ENCODE measurements at regions of chr19 and their contacts with region 1.

Region 1: GRCh38 chr19:15418588-15419412 is at the start of gene AKAP8L:
- DNase-seq: peak; percentile 94
- ATAC-seq: peak; percentile 92
- H3K4me3 Mint-ChIP-seq: peak within 1 kb of the TSS; percentile 99
- H3K27ac Mint-ChIP-seq: peak within 1 kb of the TSS; percentile 99
- H3K4me1 Mint-ChIP-seq: peaks cover 42% of the 10 kb centered on the region
- H3K27me3 Mint-ChIP-seq: no peaks in the 10 kb centered on the region
- CTCF ChIP-seq: no peak
- total RNA-seq, gene AKAP8L: 126 and 163 TPM in 2 replicates

Region 2: DNA sequence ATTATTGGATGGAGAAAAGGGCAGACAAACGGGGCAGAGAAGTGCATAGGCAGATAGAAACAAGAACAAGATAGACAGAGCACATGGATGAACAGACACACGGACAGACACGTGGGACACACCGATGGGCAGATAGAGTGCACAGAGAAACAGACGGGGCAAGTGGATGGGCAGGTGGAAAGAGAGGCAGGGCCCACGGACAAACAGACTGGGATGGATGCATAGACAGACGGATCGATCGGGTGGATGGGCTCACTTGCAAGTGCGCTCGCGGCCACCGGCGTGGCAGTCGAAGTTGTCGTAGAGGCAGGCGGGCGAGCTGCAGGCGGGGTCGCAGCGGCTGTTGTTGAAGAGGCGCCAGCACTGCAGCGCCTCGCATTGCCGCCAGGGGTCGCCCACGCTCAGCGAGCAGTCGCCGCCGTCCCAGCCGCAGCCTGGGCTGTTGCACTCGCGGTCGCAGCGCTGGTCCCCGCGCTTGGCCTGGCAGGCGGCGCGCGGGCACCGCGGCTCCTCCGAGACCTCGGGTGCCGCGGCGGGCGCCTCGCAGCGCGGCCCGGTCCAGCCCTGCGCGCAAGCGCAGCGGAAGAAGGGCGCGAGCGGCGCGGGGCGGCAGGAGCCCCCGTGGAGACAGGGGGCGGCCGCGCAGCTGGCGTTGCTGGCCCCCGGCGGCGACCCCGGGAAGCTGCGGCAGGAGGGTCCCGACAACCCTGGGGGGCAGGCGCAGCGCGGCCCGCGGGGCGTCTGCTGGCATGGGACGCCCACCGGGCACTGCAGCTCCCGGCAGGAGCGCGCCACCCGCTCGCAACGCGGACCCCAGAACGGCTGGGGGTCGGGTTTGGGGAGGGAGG is 241.3 kb before region 1 on chr19:
- CTCF ChIA-PET with region 1: interaction called, 9 read pairs
- POLR2A ChIA-PET with region 1: no interaction called
- intact Hi-C with region 1: loop called (anchors 1 kb)
- DNase-seq: peak; percentile 87
- ATAC-seq: peak; percentile 98
- H3K4me3 Mint-ChIP-seq: no peak overlapping the region
- H3K27ac Mint-ChIP-seq: no peak overlapping the region
- H3K4me1 Mint-ChIP-seq: peaks cover 4% of the 10 kb centered on the region
- H3K27me3 Mint-ChIP-seq: peaks cover 16% of the 10 kb centered on the region
- CTCF ChIP-seq: peak; percentile 80

Region 3: DNA sequence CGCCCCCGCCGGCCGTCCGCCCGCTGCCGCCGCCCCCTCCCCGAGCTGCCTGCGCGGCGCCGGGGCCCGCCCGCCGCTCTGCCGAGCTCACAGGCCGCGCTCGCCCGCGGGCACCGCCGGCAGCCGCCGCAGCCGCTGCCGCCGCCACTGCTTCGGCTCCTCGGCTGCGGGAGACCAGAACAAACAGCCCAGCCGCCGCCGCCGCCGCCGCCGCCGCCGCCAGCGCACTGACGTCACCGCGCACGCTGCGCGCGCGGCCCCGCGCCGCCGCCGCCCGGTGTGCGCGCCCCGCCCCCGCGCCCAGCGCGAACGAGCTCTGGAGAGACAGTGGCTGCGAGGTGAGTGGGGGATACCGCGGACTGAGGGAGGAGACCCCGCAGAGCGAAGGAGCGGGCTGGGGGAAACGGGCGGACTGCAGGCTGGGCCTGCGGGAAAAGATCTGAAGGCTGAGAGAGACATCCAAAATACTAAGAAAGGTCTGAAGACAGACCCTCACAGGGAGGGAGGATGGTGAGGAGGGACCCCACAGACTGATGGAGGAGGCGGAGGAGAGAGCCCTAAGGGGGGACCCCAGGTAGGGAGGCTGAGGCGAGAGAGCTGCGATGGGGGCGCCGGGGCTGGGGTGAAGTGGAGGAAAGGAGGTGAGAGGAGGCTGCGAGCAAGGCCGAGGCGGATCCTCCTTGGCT is 86.3 kb before region 1 on chr19 and contains the start of gene BRD4:
- CTCF ChIA-PET with region 1: interaction called, 5 read pairs
- POLR2A ChIA-PET with region 1: interaction called, 29 read pairs
- intact Hi-C with region 1: loop called (anchors 2 kb)
- DNase-seq: peak; percentile 86
- ATAC-seq: peak; percentile 35
- H3K4me3 Mint-ChIP-seq: peak within 1 kb of the TSS; percentile 95
- H3K27ac Mint-ChIP-seq: peak within 1 kb of the TSS; percentile 95
- H3K4me1 Mint-ChIP-seq: peaks cover 60% of the 10 kb centered on the region
- H3K27me3 Mint-ChIP-seq: no peaks in the 10 kb centered on the region
- CTCF ChIP-seq: no peak
- total RNA-seq, gene BRD4: 144 and 164 TPM in 2 replicates

Region 4: DNA sequence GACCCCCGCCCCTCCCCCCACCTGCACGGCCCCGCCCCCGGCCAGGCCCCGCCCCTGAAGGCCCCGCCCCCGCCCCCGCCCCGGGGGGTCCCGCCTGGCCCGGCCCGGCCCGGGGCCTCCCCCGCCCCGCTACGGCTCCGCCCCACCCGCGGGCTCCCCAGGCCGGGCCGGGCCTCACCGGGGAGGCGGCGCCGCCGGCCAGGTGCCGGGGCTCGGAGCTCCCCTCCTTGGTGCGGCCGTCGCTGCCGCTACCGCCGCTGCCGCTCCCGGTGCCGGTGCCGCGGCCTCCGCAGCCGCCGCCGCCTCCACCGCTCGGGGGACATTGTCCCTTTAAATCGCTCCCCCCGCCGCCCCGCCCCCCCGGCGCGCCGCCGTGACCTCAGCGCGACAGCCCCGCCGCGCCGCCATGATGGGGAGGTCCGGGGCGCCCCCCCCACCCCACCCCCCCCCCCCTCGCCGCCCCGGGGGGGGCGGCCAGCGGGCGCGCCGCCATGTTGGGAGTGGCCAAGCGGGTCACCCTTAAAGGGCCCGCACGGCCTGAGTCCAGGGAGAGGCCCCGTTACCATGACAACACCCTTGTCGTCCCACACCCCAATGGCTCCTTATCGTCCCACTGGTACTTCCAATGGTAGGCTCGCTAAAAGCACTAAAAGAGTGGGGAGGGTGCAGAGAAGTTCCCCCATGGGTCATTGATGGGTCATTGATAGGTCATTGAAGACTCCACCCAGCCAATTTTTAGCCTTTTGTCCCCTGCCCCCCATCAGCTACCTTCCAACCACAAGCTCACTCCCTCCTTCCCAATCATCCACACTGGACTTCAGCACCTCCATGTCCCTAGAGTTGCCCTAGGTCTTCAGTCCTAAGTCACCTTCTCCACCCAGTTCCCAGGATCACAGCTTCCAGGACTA is 31.1 kb after region 1 on chr19 and contains the start of gene WIZ:
- CTCF ChIA-PET with region 1: no interaction called
- POLR2A ChIA-PET with region 1: interaction called, 14 read pairs
- intact Hi-C with region 1: loop called (anchors 1 kb)
- DNase-seq: peak; percentile 89
- ATAC-seq: peak; percentile 74
- H3K4me3 Mint-ChIP-seq: peak within 1 kb of the TSS; percentile 80
- H3K27ac Mint-ChIP-seq: peak within 1 kb of the TSS; percentile 90
- H3K4me1 Mint-ChIP-seq: peaks cover 17% of the 10 kb centered on the region
- H3K27me3 Mint-ChIP-seq: no peaks in the 10 kb centered on the region
- CTCF ChIP-seq: no peak
- total RNA-seq, gene WIZ: 32.6 and 34.1 TPM in 2 replicates

Region 5: DNA sequence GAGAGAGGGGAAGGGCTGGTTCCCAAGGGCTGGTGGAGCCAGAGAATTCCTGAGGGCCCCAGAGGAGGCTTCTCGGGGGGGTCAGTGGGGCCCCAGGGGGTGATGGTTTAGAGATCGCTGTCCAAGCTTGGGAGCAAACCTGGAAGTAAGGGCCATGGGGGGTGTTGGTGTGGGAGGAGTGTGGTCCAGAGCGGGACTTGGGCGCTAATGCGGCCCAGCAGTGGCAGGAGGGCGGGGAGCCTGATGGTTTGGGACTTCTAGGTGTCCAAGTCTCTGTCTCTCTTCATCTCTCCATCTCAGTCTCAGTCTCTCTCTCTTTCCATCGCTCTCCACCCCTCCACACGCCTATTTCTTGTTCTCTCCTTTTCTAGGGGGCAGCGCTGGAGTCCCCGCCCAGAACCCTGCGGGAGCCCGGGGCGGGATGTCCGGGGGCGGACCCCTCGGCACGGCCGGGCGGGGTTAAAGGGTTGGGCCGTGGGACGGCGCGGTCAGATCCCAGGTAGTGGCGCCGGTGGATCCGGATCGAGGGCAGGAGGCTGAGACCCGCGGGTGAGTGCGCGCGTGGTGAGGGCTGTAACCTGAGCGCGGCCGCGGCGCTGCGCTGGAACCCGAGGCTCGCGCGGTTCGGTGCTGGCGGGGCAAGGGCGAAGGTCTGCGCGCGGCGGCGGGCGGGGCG is 89.4 kb after region 1 on chr19 and contains the start of gene CYP4F22:
- CTCF ChIA-PET with region 1: no interaction called
- POLR2A ChIA-PET with region 1: no interaction called
- intact Hi-C with region 1: no loop called
- DNase-seq: no peak
- ATAC-seq: no peak
- H3K4me3 Mint-ChIP-seq: no peak within 1 kb of the TSS
- H3K27ac Mint-ChIP-seq: no peak within 1 kb of the TSS
- H3K4me1 Mint-ChIP-seq: peaks cover 10% of the 10 kb centered on the region
- H3K27me3 Mint-ChIP-seq: peaks cover 45% of the 10 kb centered on the region
- CTCF ChIP-seq: no peak
- total RNA-seq, gene CYP4F22: not detected in 2 replicates

Measured in activated B cell treated with CpG ODN at 0.5 μM for 24 hours (primary cell).